Common myeloid progenitor, CD34-positive (primary cell): ENCODE measurements at regions of chr6 and their contacts with region 1.

Region 1: GRCh38 chr6:10510592-10511367 is 10.4 kb upstream of the GCNT2 start:
- DNase-seq: peak; percentile 75 to 82 (median 79)
- H3K4me3 ChIP-seq: peak overlapping the region in 4 of 7 experiments; percentile 29 to 58 (median 42)
- H3K27ac ChIP-seq: no peak overlapping the region
- H3K4me1 ChIP-seq: peaks cover 0 to 5% (median 0%) of the 10 kb centered on the region in 4 experiments
- H3K27me3 ChIP-seq: no peaks in the 10 kb centered on the region

Region 2: DNA sequence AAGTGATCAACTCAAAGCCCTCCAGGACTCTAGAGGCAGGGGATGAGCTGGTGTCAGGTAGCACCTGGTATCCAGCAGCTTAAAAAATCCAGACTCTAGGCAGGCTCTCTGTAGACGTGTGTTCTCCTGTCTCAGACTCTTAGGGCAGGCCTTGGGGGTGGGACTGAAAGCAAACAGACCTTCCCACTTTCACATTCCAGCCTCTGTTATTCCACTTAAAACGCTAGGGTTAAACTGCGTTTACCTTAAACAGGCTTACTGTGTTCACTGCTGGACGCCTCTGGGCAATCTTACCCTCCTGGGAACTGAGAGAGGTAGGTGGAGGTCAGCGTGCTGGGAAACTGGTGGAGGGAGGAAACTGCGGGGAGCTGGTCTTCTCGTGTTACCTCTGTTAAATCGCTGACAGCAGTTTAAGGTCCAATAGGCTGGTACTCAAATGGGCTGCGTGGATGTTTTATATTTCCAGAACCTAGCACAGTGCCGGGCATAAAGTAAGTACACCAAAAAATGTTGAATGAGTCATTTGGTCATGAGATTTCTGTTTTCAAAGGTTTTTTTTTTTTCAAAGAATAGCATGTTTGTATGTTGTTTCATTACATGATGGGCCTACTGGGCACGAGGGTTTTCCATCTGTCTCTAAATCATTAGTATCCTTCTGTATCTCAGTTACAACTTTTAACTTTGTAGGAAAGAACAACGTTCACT is 10.5 kb after region 1 on chr6 and contains the start of gene GCNT2:
- CTCF ChIA-PET with region 1: interaction called, 15 read pairs
- POLR2A ChIA-PET with region 1: no interaction called
- DNase-seq: peak in 2 of 3 donors; percentile 63 to 77
- H3K4me3 ChIP-seq: peak within 1 kb of the TSS in 6 of 7 experiments; percentile 38 to 78 (median 58)
- H3K27ac ChIP-seq: peak within 1 kb of the TSS; percentile 69 to 85
- H3K4me1 ChIP-seq: peaks cover 30 to 73% (median 55%) of the 10 kb centered on the region in 4 experiments
- H3K27me3 ChIP-seq: no peaks in the 10 kb centered on the region

Region 3: DNA sequence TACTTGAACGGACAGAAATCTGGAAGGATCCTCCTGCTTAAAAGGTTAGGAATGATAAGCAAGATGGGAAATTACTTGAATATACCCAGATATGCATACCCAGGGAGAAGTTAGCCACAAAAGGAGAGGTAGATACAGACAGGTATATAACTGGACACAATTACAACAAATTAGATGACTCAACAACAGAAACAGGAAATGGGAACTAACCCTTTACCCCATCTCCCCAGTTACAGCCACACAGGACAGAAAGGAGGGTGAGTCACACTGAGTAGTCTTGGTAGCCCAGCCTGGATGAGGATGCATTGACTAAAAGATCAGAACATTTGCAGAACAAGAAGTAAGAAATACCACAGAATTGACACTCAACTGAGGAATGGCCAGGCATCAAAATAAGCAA is 122.4 kb after region 1 on chr6:
- CTCF ChIA-PET with region 1: no interaction called
- POLR2A ChIA-PET with region 1: no interaction called
- DNase-seq: peak; percentile 29 to 85 (median 76)
- H3K4me3 ChIP-seq: no peak overlapping the region
- H3K27ac ChIP-seq: no peak overlapping the region
- H3K4me1 ChIP-seq: peaks cover 0 to 14% (median 2%) of the 10 kb centered on the region in 4 experiments
- H3K27me3 ChIP-seq: no peaks in the 10 kb centered on the region

Region 4: DNA sequence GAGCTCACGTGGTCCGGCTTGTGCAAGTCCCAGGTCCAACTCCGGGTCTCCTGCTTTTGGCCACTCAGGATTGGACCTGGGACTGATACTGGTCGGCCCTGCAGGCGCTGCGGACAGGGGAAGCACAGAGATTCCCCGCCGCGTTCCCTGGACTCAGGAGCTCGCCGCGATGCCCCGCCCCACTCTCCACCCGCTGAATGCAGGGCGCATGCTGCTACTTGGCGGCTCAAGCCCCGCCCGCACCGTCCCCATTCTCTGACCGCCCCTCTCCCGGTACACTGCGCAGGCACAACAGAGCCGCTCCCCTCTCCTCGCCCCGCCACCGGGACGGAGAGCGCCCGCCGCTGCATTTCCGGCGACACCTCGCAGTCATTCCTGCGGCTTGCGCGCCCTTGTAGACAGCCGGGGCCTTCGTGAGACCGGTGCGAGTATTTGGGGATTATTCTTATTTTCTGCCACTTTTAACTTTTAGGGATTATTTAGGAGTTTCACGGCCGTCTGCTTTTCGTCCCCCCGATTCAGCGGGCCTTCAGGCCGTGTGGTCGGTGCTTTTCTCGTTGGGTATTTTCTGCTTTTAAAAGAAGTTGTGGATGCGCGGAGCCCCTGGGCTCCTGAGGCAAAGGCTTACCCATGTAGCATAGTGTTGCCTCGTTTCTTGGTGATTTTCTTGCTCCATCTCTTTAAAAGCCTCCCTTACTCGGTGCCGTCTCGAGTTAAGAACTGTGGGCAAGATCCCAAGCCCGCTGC is 212.2 kb after region 1 on chr6 and contains the start of gene TMEM14C:
- CTCF ChIA-PET with region 1: interaction called, 16 read pairs
- POLR2A ChIA-PET with region 1: no interaction called
- DNase-seq: peak; percentile 86 to 91 (median 88)
- H3K4me3 ChIP-seq: peak within 1 kb of the TSS; percentile 67 to 87 (median 81)
- H3K27ac ChIP-seq: peak within 1 kb of the TSS; percentile 58 to 88
- H3K4me1 ChIP-seq: peaks cover 4 to 27% (median 22%) of the 10 kb centered on the region in 4 experiments
- H3K27me3 ChIP-seq: no peaks in the 10 kb centered on the region

Region 5: DNA sequence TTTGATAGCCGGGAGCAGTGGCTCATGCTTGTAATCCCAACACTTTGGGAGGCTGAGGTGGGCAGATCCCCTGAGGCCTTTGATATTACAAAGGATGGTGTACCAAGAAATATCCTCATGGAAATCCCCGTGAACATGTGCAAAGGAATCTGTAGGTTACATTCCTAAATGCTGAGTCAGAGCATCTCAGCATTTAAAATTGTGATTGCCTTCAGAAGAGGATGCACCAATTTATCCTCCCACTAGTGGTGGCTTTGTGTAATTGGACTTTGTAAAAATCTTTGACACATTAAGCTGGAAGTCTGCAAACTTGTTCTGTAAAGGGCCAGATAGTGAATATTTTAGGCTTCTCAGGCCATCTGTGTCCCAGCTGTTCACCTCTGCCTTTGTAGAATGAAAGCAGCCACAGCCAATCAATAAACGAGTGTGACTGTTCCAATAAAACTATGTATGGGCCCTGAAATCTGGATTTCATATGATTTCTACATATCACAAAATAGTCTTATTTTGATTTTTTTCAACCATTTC is 248.6 kb after region 1 on chr6:
- CTCF ChIA-PET with region 1: interaction called, 10 read pairs
- POLR2A ChIA-PET with region 1: no interaction called
- DNase-seq: peak; percentile 60 to 80 (median 76)
- H3K4me3 ChIP-seq: no peak overlapping the region
- H3K27ac ChIP-seq: no peak overlapping the region
- H3K4me1 ChIP-seq: no peaks in the 10 kb centered on the region
- H3K27me3 ChIP-seq: no peaks in the 10 kb centered on the region

Region 6: GRCh38 chr6:10800829-10801535 is 290.2 kb after region 1 on chr6:
- CTCF ChIA-PET with region 1: interaction called, 12 read pairs
- POLR2A ChIA-PET with region 1: no interaction called
- DNase-seq: peak; percentile 48 to 71 (median 66)
- H3K4me3 ChIP-seq: no peak overlapping the region
- H3K27ac ChIP-seq: no peak overlapping the region
- H3K4me1 ChIP-seq: no peaks in the 10 kb centered on the region
- H3K27me3 ChIP-seq: no peaks in the 10 kb centered on the region